CD8-positive, alpha-beta T cell (primary cell): ENCODE measurements at regions of chr6 and their contacts with region 1.

Region 1: GRCh38 chr6:154156135-154156896 is 117.3 kb downstream of the OPRM1 start:
- DNase-seq: peak; percentile 34 to 84 (median 60)
- ATAC-seq: peak; percentile 92
- H3K4me3 ChIP-seq: peak overlapping the region; percentile 28 to 40
- H3K4me3 Mint-ChIP-seq: peak overlapping the region; percentile 82
- H3K27ac ChIP-seq: peak overlapping the region; percentile 42 to 83
- H3K27ac Mint-ChIP-seq: peak overlapping the region; percentile 92
- H3K4me1 ChIP-seq: peaks cover 37% of the 10 kb centered on the region
- H3K4me1 Mint-ChIP-seq: peaks cover 56% of the 10 kb centered on the region
- H3K27me3 ChIP-seq: no peaks in the 10 kb centered on the region
- H3K27me3 Mint-ChIP-seq: no peaks in the 10 kb centered on the region
- CTCF ChIP-seq: peak; percentile 76

Region 2: GRCh38 chr6:153941768-153942167 is 214.5 kb before region 1 on chr6:
- CTCF ChIA-PET with region 1: no interaction called
- POLR2A ChIA-PET with region 1: no interaction called
- intact Hi-C with region 1: no loop called
- DNase-seq: no peak
- ATAC-seq: no peak
- H3K4me3 ChIP-seq: no peak overlapping the region
- H3K4me3 Mint-ChIP-seq: no peak overlapping the region
- H3K27ac ChIP-seq: no peak overlapping the region
- H3K27ac Mint-ChIP-seq: no peak overlapping the region
- H3K4me1 ChIP-seq: no peaks in the 10 kb centered on the region
- H3K4me1 Mint-ChIP-seq: no peaks in the 10 kb centered on the region
- H3K27me3 ChIP-seq: no peaks in the 10 kb centered on the region
- H3K27me3 Mint-ChIP-seq: peaks cover 3% of the 10 kb centered on the region
- CTCF ChIP-seq: no peak

Region 3: GRCh38 chr6:154218301-154218700 is 62.0 kb after region 1 on chr6:
- CTCF ChIA-PET with region 1: interaction called, 4 read pairs
- POLR2A ChIA-PET with region 1: no interaction called
- intact Hi-C with region 1: loop called in 1 of 2 experiments (anchors 5 kb)
- DNase-seq: peak in 1 of 9 experiments; percentile 24
- ATAC-seq: peak; percentile 44
- H3K4me3 ChIP-seq: no peak overlapping the region
- H3K4me3 Mint-ChIP-seq: peak overlapping the region; percentile 44
- H3K27ac ChIP-seq: peak overlapping the region in 1 of 2 experiments; percentile 27
- H3K27ac Mint-ChIP-seq: peak overlapping the region; percentile 88
- H3K4me1 ChIP-seq: peaks cover 44% of the 10 kb centered on the region
- H3K4me1 Mint-ChIP-seq: peaks cover 66% of the 10 kb centered on the region
- H3K27me3 ChIP-seq: no peaks in the 10 kb centered on the region
- H3K27me3 Mint-ChIP-seq: no peaks in the 10 kb centered on the region
- CTCF ChIP-seq: no peak

Region 4: DNA sequence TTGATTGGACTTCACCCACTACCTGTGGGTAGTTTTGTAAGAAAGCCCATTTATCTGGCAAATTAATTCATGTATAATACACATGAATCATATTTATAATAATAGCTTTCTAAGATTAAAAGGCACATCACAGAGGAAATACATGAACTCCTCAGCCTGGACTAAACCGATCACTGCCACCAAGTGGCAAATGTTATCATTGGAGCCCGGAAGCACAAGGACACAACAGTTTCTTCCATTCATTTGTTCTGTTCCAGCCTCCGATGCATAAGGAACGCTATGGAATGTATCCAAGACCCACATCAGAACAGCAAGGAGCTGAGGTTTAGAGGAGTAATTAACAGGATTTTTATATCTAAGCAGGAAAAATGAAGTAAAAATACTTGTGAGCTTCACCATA is 214.2 kb after region 1 on chr6:
- CTCF ChIA-PET with region 1: interaction called, 36 read pairs
- POLR2A ChIA-PET with region 1: no interaction called
- intact Hi-C with region 1: loop called (anchors 1 kb)
- DNase-seq: peak in 2 of 9 experiments; percentile 25 to 52
- ATAC-seq: peak; percentile 31
- H3K4me3 ChIP-seq: no peak overlapping the region
- H3K4me3 Mint-ChIP-seq: no peak overlapping the region
- H3K27ac ChIP-seq: no peak overlapping the region
- H3K27ac Mint-ChIP-seq: no peak overlapping the region
- H3K4me1 ChIP-seq: no peaks in the 10 kb centered on the region
- H3K4me1 Mint-ChIP-seq: no peaks in the 10 kb centered on the region
- H3K27me3 ChIP-seq: no peaks in the 10 kb centered on the region
- H3K27me3 Mint-ChIP-seq: no peaks in the 10 kb centered on the region
- CTCF ChIP-seq: peak; percentile 33

Region 5: GRCh38 chr6:154675602-154676088 is 519.3 kb after region 1 on chr6:
- CTCF ChIA-PET with region 1: no interaction called
- POLR2A ChIA-PET with region 1: no interaction called
- intact Hi-C with region 1: loop called (anchors 2 to 5 kb)
- DNase-seq: peak; percentile 77 to 95 (median 85)
- ATAC-seq: peak; percentile 100
- H3K4me3 ChIP-seq: no peak overlapping the region
- H3K4me3 Mint-ChIP-seq: no peak overlapping the region
- H3K27ac ChIP-seq: no peak overlapping the region
- H3K27ac Mint-ChIP-seq: no peak overlapping the region
- H3K4me1 ChIP-seq: no peaks in the 10 kb centered on the region
- H3K4me1 Mint-ChIP-seq: no peaks in the 10 kb centered on the region
- H3K27me3 ChIP-seq: no peaks in the 10 kb centered on the region
- H3K27me3 Mint-ChIP-seq: no peaks in the 10 kb centered on the region
- CTCF ChIP-seq: peak; percentile 100